Tibial artery (tissue), 4 donors: ENCODE measurements at regions of chr4 and their contacts with region 1.

Region 1: GRCh38 chr4:15956179-15956850 is 6.7 kb downstream of the FGFBP2 start:
- DNase-seq: peak; percentile 83 to 84
- H3K4me3 ChIP-seq: no peak overlapping the region
- H3K27ac ChIP-seq: no peak overlapping the region
- H3K4me1 ChIP-seq: no peaks in the 10 kb centered on the region
- H3K27me3 ChIP-seq: no peaks in the 10 kb centered on the region
- CTCF ChIP-seq: peak; percentile 93 to 94

Region 2: DNA sequence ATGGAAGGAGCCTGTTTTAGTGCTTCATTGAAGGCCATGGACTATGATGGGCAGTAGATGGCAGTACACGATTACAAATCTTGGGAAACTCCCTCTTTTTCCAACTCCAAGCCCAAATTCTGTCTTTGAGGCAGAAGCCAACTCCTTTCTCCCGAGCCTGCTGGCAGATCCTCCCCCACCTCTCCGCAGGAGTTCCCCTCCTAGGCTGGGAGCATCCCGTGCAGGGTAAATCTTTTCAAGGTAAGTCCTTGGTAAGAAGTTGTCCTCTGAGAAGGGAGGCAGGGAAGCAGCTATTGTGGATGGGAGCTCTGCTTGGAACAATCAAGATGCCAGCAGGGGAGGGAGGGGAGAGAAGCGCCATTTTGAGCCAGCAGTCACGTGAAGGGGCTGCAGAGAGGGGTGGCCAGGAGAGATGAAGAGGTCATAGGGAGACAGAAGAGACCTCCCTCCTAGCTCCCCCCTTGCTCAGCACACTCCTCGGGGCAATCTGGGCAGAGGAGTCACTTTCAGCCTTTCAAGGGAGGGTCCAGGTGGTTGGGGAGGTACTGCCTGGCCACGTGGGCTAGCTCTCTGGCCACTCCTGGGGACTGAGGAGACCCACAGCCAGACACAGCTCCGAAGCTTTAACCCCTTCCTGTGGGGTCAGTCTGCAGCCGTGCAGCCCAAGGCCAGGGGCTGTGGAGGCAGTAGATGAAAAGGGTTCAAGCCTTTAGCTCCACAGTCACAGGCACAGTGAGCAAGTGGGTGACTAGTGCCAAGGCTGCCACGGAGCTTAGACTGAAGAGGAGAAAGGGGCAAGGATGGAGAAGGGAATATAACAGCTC is 477.0 kb before region 1 on chr4:
- intact Hi-C with region 1: loop called (anchors 5 kb)
- DNase-seq: peak; percentile 37 to 68
- H3K4me3 ChIP-seq: peak overlapping the region; percentile 55 to 56
- H3K27ac ChIP-seq: peak overlapping the region; percentile 75 to 79
- H3K4me1 ChIP-seq: peaks cover 0 to 25% (median 15%) of the 10 kb centered on the region in 4 donors
- H3K27me3 ChIP-seq: no peaks in the 10 kb centered on the region
- CTCF ChIP-seq: peak; percentile 63 to 74

Region 3: DNA sequence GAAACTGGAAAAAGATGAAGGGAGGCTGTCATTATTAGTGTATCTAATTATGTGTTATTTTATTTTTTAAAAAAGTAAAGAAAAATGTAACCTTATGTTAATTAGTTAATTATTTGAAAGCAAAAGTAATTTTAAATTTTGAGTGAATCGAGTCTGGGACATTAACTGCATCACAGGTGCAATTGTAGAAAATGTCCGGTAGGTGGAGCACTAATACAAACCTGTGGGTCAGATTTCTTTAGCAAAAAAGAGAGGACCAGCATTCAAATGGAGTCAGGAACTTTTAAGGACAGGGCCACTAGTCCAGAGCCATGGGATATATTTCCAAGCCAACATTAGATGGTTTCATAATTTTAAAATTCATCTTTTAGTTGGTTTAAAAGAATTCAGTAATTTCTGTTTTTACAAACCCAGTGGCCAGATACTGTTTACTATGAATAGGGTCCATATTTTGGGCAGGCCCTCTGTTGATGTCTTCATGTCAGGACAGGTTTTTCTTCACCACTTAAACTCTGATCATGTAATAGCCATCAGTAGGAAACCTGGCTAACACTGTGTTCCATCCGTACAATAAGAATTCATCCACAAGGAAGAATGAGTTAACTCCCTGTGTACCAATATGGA is 226.3 kb before region 1 on chr4:
- intact Hi-C with region 1: loop called (anchors 5 kb)
- DNase-seq: no peak
- H3K4me3 ChIP-seq: no peak overlapping the region
- H3K27ac ChIP-seq: no peak overlapping the region
- H3K4me1 ChIP-seq: no peaks in the 10 kb centered on the region
- H3K27me3 ChIP-seq: no peaks in the 10 kb centered on the region
- CTCF ChIP-seq: peak; percentile 58 to 86

Region 4: DNA sequence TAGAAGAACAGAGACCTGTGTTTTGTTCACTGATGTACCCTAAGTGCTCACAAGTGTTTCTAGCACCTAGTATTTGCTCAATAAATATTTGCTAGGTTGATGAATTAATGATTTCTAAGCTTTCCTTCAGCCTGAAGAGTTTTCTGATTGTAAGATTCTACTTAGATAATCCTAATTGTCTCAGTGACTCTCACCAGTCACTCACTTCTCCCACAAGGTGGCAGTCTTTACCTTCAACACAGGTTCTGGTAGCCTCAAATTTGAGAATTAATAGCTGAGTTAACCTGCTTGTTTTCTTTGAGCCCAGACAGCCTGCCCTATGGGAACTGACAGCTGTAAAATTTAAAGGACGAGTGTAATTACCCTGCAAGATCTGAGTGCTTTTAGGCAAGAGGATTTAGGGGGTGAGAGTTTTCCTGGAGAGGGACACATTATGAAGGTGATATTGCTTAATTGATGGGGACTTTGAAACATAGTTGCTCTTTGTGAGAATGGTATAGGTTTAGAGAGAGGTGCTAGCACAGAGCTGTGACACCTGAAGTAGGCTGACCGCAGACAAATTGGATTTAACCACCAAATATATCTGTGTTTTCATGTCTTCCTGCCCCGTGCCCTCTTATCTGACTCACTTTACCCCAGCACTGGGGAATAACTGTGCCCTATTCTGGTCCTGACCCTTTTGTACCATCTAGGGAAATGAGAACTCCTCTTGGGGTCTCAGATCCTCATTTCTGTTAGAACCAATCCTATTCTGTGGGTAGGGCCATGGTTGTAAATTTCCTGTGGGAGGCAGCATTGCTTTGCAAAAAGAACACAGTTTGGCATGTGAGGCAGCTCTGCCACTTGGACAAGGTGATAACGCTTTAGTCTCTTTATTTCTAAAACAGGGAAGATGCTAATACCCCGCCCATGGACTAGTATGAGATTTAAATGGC is 150.5 kb before region 1 on chr4:
- intact Hi-C with region 1: loop called (anchors 10 kb)
- DNase-seq: peak in 1 of 2 donors; percentile 41
- H3K4me3 ChIP-seq: no peak overlapping the region
- H3K27ac ChIP-seq: no peak overlapping the region
- H3K4me1 ChIP-seq: peaks cover 0 to 5% (median 0%) of the 10 kb centered on the region in 4 donors
- H3K27me3 ChIP-seq: no peaks in the 10 kb centered on the region
- CTCF ChIP-seq: peak; percentile 59 to 62

Region 5: GRCh38 chr4:15882675-15883086 is 73.6 kb before region 1 on chr4:
- intact Hi-C with region 1: loop called (anchors 2 kb)
- DNase-seq: peak in 1 of 2 donors; percentile 27
- H3K4me3 ChIP-seq: no peak overlapping the region
- H3K27ac ChIP-seq: no peak overlapping the region
- H3K4me1 ChIP-seq: no peaks in the 10 kb centered on the region
- H3K27me3 ChIP-seq: no peaks in the 10 kb centered on the region
- CTCF ChIP-seq: peak; percentile 83 to 87